Endothelial cell of umbilical vein (primary cell): ENCODE measurements at regions of chr6 and their contacts with region 1.

Region 1: DNA sequence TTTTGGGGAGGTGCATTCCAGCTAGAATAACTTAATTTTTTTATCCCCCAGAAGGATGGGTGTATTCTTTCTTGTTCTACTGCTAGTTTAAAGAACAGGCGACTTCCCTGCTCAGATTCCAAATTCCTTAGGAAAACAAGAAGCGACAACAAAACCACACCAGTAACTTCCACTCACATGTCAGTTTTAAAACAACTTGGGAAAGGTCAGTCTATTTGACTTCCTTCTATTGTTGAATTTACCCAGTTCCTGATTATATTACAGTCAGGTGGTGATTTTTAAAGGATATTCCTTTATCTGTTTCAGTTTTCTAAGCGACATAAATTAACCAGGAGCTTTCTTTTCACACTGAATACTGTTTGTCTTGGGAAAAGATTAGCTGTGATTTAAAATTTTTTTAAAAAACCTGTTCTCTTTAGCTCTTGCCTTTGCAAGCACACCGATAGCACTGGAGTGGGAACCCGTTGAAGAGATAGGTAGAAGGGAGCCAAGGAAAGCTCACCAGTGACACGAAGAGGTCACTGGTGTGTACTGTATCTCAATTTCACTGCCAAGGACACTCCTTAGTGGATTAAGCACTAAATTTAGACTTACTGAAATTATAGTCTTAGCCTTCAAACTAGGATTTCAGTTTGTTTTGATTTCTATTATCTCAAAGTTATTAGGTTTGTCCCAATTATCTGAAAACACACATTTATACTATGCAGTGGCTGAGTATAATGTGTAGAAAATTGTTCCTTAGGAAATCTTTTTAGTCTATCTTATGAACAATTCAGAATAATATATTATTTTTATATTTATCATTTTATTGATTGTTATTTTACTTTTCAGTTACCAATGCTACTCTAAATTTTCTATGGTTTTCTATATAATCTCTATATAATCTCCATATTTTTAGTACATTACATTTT is 22.3 kb downstream of the MARCKS start:
- DNase-seq: peak; percentile 91
- H3K4me3 ChIP-seq: peak overlapping the region in 1 of 3 experiments; percentile 69
- H3K27ac ChIP-seq: peak overlapping the region; percentile 63
- H3K4me1 ChIP-seq: peaks cover 9% of the 10 kb centered on the region
- H3K27me3 ChIP-seq: no peaks in the 10 kb centered on the region
- CTCF ChIP-seq: peak; percentile 68
- POLR2A ChIP-seq: no peak

Region 2: GRCh38 chr6:112802144-112802543 is 1077.3 kb before region 1 on chr6:
- CTCF ChIA-PET with region 1: interaction called, 11 read pairs
- POLR2A ChIA-PET with region 1: no interaction called
- dilution Hi-C with region 1: no loop called
- intact Hi-C with region 1: no loop called
- DNase-seq: peak; percentile 93
- H3K4me3 ChIP-seq: peak overlapping the region in 1 of 3 experiments; percentile 35
- H3K27ac ChIP-seq: peak overlapping the region; percentile 68
- H3K4me1 ChIP-seq: peaks cover 19% of the 10 kb centered on the region
- H3K27me3 ChIP-seq: no peaks in the 10 kb centered on the region
- CTCF ChIP-seq: no peak
- POLR2A ChIP-seq: no peak

Region 3: GRCh38 chr6:113306552-113307145 is 572.8 kb before region 1 on chr6:
- CTCF ChIA-PET with region 1: interaction called, 7 read pairs
- POLR2A ChIA-PET with region 1: no interaction called
- dilution Hi-C with region 1: no loop called
- intact Hi-C with region 1: loop called (anchors 5 kb)
- DNase-seq: peak; percentile 36
- H3K4me3 ChIP-seq: no peak overlapping the region
- H3K27ac ChIP-seq: no peak overlapping the region
- H3K4me1 ChIP-seq: no peaks in the 10 kb centered on the region
- H3K27me3 ChIP-seq: no peaks in the 10 kb centered on the region
- CTCF ChIP-seq: peak; percentile 39 to 49
- POLR2A ChIP-seq: no peak

Region 4: GRCh38 chr6:113414511-113414910 is 464.9 kb before region 1 on chr6:
- CTCF ChIA-PET with region 1: interaction called, 5 read pairs
- POLR2A ChIA-PET with region 1: no interaction called
- dilution Hi-C with region 1: no loop called
- intact Hi-C with region 1: loop called (anchors 1 kb)
- DNase-seq: peak; percentile 79
- H3K4me3 ChIP-seq: no peak overlapping the region
- H3K27ac ChIP-seq: no peak overlapping the region
- H3K4me1 ChIP-seq: peaks cover 9% of the 10 kb centered on the region
- H3K27me3 ChIP-seq: no peaks in the 10 kb centered on the region
- CTCF ChIP-seq: peak; percentile 55 to 57
- POLR2A ChIP-seq: no peak

Region 5: GRCh38 chr6:113825781-113826180 is 53.7 kb before region 1 on chr6:
- CTCF ChIA-PET with region 1: no interaction called
- POLR2A ChIA-PET with region 1: no interaction called
- dilution Hi-C with region 1: no loop called
- intact Hi-C with region 1: no loop called
- DNase-seq: no peak
- H3K4me3 ChIP-seq: no peak overlapping the region
- H3K27ac ChIP-seq: no peak overlapping the region
- H3K4me1 ChIP-seq: no peaks in the 10 kb centered on the region
- H3K27me3 ChIP-seq: no peaks in the 10 kb centered on the region
- CTCF ChIP-seq: no peak
- POLR2A ChIP-seq: no peak